ENCODE measurements at regions of chr2 and their contacts with region 1.

Region 1: DNA sequence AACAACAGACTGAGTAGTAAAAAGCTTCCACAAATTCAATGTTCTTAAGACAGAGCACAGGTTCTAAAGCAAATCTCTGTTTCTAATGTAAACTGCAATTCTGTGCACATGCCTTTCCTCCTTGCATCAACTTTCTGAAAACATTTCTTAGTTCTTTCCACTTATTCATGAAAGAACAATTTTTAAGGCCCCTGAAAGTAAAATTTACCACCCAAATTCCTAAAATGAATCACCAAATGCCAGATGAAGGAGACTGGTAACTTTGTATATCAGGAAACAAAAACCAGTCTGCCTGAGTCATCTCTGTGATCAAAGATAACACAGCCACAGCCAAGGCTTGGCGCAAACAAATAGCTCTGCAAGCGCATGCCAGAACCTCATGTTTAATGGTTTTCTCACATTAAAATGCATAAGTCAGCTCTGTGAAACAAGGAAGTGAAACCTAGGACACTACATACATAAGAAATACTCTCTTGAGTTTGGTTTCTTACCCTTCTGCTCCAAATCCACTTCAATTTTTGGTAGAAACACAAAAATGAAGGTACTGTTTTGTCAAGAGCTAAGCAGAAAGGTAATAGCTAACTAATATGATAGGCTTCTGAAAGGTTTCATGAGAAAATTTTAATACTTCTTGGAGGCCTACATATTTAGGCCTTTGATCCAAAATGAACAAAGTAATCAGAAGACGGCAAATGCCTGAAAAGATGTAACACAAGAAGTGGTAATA is 169.4 kb downstream of the THADA start:
- DNase-seq: peak; percentile 86
- H3K4me3 Mint-ChIP-seq: peak overlapping the region; percentile 20
- H3K27ac Mint-ChIP-seq: peak overlapping the region; percentile 91
- H3K4me1 Mint-ChIP-seq: peaks cover 16% of the 10 kb centered on the region
- H3K27me3 Mint-ChIP-seq: no peaks in the 10 kb centered on the region
- CTCF ChIP-seq: no peak

Region 2: GRCh38 chr2:42693013-42693615 is 733.4 kb before region 1 on chr2:
- CTCF ChIA-PET with region 1: no interaction called
- POLR2A ChIA-PET with region 1: no interaction called
- intact Hi-C with region 1: no loop called
- DNase-seq: no peak
- H3K4me3 Mint-ChIP-seq: no peak overlapping the region
- H3K27ac Mint-ChIP-seq: no peak overlapping the region
- H3K4me1 Mint-ChIP-seq: peaks cover 5% of the 10 kb centered on the region
- H3K27me3 Mint-ChIP-seq: no peaks in the 10 kb centered on the region
- CTCF ChIP-seq: no peak

Region 3: DNA sequence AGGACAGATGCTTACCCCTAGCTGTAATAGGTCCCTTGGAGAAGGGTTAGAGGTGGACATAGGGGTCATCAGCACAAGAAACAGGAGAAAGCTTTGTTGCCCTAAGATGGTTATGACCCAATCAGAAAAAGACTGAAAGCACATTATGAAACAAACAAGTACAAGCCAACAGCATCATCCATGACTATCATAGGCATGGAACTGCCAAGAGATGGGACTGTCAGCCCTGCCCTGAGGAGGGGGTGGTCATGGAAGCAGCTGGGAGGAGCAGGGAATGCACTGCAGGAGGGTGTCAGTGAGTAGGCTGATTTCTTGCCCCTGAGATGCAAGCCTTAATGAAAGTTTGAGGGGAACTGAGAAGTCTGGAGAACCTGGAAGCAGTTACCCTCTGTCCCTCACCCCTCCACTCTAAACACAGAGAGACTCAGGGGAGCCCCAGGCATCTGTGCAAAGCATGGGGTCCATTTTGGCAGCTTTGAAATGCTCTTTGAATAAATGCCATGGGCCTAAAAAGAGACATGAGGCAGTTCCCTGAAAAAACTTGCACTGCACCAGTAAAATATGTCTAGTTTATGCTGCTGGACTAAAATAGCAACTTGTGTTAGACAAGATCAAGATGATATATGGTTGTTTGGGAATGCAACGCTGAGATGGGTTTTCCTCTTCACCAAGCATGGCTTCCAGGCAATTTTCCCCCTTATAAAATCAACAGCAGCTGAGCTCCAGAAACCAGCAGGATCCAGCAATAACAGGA is 77.4 kb before region 1 on chr2:
- CTCF ChIA-PET with region 1: no interaction called
- POLR2A ChIA-PET with region 1: no interaction called
- intact Hi-C with region 1: no loop called
- DNase-seq: no peak
- H3K4me3 Mint-ChIP-seq: no peak overlapping the region
- H3K27ac Mint-ChIP-seq: peak overlapping the region; percentile 59
- H3K4me1 Mint-ChIP-seq: peaks cover 4% of the 10 kb centered on the region
- H3K27me3 Mint-ChIP-seq: no peaks in the 10 kb centered on the region
- CTCF ChIP-seq: no peak

Region 4: DNA sequence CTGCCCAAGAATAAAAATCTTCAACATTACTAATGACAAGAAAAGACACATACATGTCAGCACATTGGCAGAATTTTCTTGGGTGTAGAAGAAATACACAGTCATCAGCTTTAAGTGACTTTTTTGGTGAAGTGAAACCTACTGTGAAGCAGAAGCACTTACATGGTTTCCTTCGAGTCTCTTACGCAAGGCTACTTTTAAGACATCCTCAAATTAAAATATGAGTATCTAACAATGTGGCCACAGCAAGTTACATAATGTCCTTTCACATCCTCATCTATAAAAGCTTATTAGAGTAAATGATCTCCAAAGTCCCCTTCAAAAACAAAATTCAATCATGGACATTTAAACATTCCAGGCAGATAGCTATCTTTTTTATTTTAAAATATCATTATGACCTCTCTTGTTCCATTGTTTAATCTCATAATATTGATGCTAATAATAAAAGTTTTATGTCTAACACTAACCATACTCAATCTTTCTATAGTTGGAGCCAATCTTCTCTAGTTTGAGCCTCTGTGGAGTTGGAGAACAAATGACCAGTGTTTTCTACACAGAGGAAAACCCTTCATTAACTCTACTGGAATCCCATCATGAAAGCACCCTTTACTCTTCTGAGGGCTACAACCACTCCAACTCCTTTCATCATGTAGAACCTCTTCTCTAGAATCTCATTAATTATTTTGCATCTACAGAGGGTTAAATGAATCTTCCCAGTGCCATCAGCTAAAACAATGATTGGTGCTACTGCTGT is 17.9 kb before region 1 on chr2:
- CTCF ChIA-PET with region 1: interaction called, 13 read pairs
- POLR2A ChIA-PET with region 1: interaction called, 4 read pairs
- intact Hi-C with region 1: no loop called
- DNase-seq: no peak
- H3K4me3 Mint-ChIP-seq: no peak overlapping the region
- H3K27ac Mint-ChIP-seq: no peak overlapping the region
- H3K4me1 Mint-ChIP-seq: peaks cover 9% of the 10 kb centered on the region
- H3K27me3 Mint-ChIP-seq: no peaks in the 10 kb centered on the region
- CTCF ChIP-seq: no peak

Region 5: DNA sequence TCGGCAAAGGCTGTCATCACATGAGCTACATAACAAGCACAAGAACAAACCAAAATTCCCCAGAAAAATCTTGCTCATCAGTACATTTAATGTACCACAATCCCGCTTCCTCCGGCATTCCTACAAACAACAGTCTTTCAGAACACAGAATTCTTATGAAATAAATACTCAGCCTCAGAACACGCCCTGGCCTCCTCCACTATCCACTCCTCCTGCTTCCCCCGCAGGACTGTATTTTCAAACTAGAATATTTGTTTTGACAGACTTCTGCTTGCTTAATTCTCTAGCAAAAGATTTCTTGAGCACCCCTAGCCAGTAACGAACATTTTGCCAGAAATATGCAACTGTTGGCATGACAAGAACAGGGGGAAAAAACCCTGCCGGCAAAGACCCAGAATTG is 38.1 kb after region 1 on chr2:
- CTCF ChIA-PET with region 1: interaction called, 4 read pairs
- POLR2A ChIA-PET with region 1: interaction called, 22 read pairs
- intact Hi-C with region 1: no loop called
- DNase-seq: peak; percentile 59
- H3K4me3 Mint-ChIP-seq: peak overlapping the region; percentile 35
- H3K27ac Mint-ChIP-seq: peak overlapping the region; percentile 95
- H3K4me1 Mint-ChIP-seq: peaks cover 56% of the 10 kb centered on the region
- H3K27me3 Mint-ChIP-seq: no peaks in the 10 kb centered on the region
- CTCF ChIP-seq: no peak

Region 6: GRCh38 chr2:43478411-43479086 is 52.1 kb after region 1 on chr2:
- CTCF ChIA-PET with region 1: interaction called, 8 read pairs
- POLR2A ChIA-PET with region 1: interaction called, 11 read pairs
- intact Hi-C with region 1: no loop called
- DNase-seq: no peak
- H3K4me3 Mint-ChIP-seq: no peak overlapping the region
- H3K27ac Mint-ChIP-seq: peak overlapping the region; percentile 37
- H3K4me1 Mint-ChIP-seq: peaks cover 46% of the 10 kb centered on the region
- H3K27me3 Mint-ChIP-seq: no peaks in the 10 kb centered on the region
- CTCF ChIP-seq: no peak